ENCODE measurements at regions of chr1 and their contacts with region 1.

Region 1: DNA sequence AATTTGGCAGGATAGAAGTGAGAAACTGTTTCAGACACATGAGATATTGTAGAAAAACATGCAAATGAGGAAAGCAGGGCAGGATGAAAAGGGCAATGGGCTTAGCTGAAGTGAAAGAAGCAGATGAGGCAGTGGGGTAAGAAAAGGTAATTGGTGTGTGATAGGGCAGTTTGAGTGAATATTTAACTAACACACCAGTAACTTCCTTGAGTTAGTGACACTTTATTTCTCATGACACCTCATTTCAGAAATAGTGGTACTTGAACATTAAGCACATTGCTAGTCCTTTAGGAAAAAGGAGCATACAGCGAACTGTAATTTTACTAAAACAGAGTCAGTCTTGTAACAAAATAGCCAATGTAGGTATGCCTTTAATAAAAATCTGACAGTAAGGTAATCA is 415.0 kb downstream of the DPYD start:
- DNase-seq: peak; percentile 43
- ATAC-seq: peak; percentile 99
- H3K4me3 ChIP-seq: no peak overlapping the region
- H3K27ac ChIP-seq: no peak overlapping the region
- H3K4me1 ChIP-seq: no peaks in the 10 kb centered on the region
- H3K27me3 ChIP-seq: no peaks in the 10 kb centered on the region
- CTCF ChIP-seq: no peak
- EP300 ChIP-seq: peak; percentile 28 to 48; a peak in 2 of 4 replicates
- POLR2A ChIP-seq: no peak
- RAD21 ChIP-seq: no peak

Region 2: GRCh38 chr1:97163591-97164275 is 342.1 kb before region 1 on chr1:
- CTCF ChIA-PET with region 1: no interaction called
- POLR2A ChIA-PET with region 1: no interaction called
- RAD21 ChIA-PET with region 1: no interaction called
- SMC1A ChIA-PET with region 1: no interaction called
- in situ Hi-C with region 1: no loop called
- intact Hi-C with region 1: loop called (anchors 5 kb)
- DNase-seq: peak; percentile 51
- ATAC-seq: peak; percentile 83
- H3K4me3 ChIP-seq: no peak overlapping the region
- H3K27ac ChIP-seq: no peak overlapping the region
- H3K4me1 ChIP-seq: peaks cover 4% of the 10 kb centered on the region; the same call in 1 of the 2 replicates
- H3K27me3 ChIP-seq: no peaks in the 10 kb centered on the region
- CTCF ChIP-seq: no peak
- EP300 ChIP-seq: peak in 1 of 2 experiments; percentile 27; a peak in 1 of 4 replicates
- POLR2A ChIP-seq: no peak
- RAD21 ChIP-seq: no peak

Region 3: GRCh38 chr1:97356309-97356708 is 149.5 kb before region 1 on chr1:
- CTCF ChIA-PET with region 1: no interaction called
- POLR2A ChIA-PET with region 1: no interaction called
- RAD21 ChIA-PET with region 1: no interaction called
- SMC1A ChIA-PET with region 1: no interaction called
- in situ Hi-C with region 1: no loop called
- intact Hi-C with region 1: no loop called
- DNase-seq: no peak
- ATAC-seq: no peak
- H3K4me3 ChIP-seq: no peak overlapping the region
- H3K27ac ChIP-seq: no peak overlapping the region
- H3K4me1 ChIP-seq: no peaks in the 10 kb centered on the region
- H3K27me3 ChIP-seq: no peaks in the 10 kb centered on the region
- CTCF ChIP-seq: no peak
- EP300 ChIP-seq: no peak
- POLR2A ChIP-seq: no peak
- RAD21 ChIP-seq: no peak

Region 4: GRCh38 chr1:97427371-97427770 is 78.4 kb before region 1 on chr1:
- CTCF ChIA-PET with region 1: no interaction called
- POLR2A ChIA-PET with region 1: no interaction called
- RAD21 ChIA-PET with region 1: interaction called, 5 read pairs
- SMC1A ChIA-PET with region 1: no interaction called
- in situ Hi-C with region 1: no loop called
- intact Hi-C with region 1: loop called (anchors 5 kb)
- DNase-seq: peak; percentile 19
- ATAC-seq: peak; percentile 80
- H3K4me3 ChIP-seq: no peak overlapping the region
- H3K27ac ChIP-seq: no peak overlapping the region
- H3K4me1 ChIP-seq: no peaks in the 10 kb centered on the region; the same call in 1 of the 2 replicates
- H3K27me3 ChIP-seq: no peaks in the 10 kb centered on the region
- CTCF ChIP-seq: no peak
- EP300 ChIP-seq: no peak
- POLR2A ChIP-seq: no peak
- RAD21 ChIP-seq: no peak

Region 5: DNA sequence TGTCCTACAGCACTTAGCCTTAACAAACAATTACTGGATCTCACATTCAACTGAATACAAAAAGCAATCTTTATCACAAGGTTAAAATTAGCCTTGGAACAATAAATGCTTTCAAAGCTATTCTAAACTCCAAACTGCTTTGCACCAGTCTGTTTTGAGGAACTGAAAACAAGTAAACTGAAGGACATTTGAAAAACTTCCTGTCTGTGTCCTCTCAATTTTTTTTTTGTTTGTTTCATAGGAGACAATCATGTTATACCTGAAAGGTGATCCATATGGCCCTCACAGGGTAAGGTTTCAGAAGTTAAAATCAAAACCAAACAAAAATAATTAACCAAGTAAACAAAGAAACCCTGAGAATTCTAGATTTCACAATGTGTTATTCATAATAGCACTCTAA is 44.0 kb before region 1 on chr1:
- CTCF ChIA-PET with region 1: interaction called, 9 read pairs
- POLR2A ChIA-PET with region 1: interaction called, 4 read pairs
- RAD21 ChIA-PET with region 1: interaction called, 10 read pairs
- SMC1A ChIA-PET with region 1: interaction called, 20 read pairs
- in situ Hi-C with region 1: no loop called
- intact Hi-C with region 1: loop called (anchors 5 kb)
- DNase-seq: peak; percentile 59
- ATAC-seq: peak; percentile 95
- H3K4me3 ChIP-seq: no peak overlapping the region
- H3K27ac ChIP-seq: peak overlapping the region; percentile 36; the same call in 1 of the 2 replicates
- H3K4me1 ChIP-seq: peaks cover 8% of the 10 kb centered on the region; the same call in 1 of the 2 replicates
- H3K27me3 ChIP-seq: no peaks in the 10 kb centered on the region
- CTCF ChIP-seq: no peak
- EP300 ChIP-seq: peak; percentile 78 to 95
- POLR2A ChIP-seq: no peak
- RAD21 ChIP-seq: no peak

Region 6: GRCh38 chr1:97489834-97490233 is 16.0 kb before region 1 on chr1:
- CTCF ChIA-PET with region 1: interaction called, 7 read pairs
- POLR2A ChIA-PET with region 1: interaction called, 8 read pairs
- RAD21 ChIA-PET with region 1: interaction called, 3 read pairs
- SMC1A ChIA-PET with region 1: interaction called, 15 read pairs
- in situ Hi-C with region 1: no loop called
- intact Hi-C with region 1: no loop called
- DNase-seq: no peak
- ATAC-seq: peak; percentile 85
- H3K4me3 ChIP-seq: no peak overlapping the region
- H3K27ac ChIP-seq: no peak overlapping the region
- H3K4me1 ChIP-seq: no peaks in the 10 kb centered on the region
- H3K27me3 ChIP-seq: no peaks in the 10 kb centered on the region
- CTCF ChIP-seq: no peak
- EP300 ChIP-seq: no peak
- POLR2A ChIP-seq: no peak
- RAD21 ChIP-seq: no peak

Region 7: GRCh38 chr1:97726383-97726782 is 220.6 kb after region 1 on chr1:
- CTCF ChIA-PET with region 1: no interaction called
- POLR2A ChIA-PET with region 1: no interaction called
- RAD21 ChIA-PET with region 1: no interaction called
- SMC1A ChIA-PET with region 1: no interaction called
- in situ Hi-C with region 1: no loop called
- intact Hi-C with region 1: no loop called
- DNase-seq: no peak
- ATAC-seq: no peak
- H3K4me3 ChIP-seq: no peak overlapping the region
- H3K27ac ChIP-seq: no peak overlapping the region
- H3K4me1 ChIP-seq: no peaks in the 10 kb centered on the region
- H3K27me3 ChIP-seq: no peaks in the 10 kb centered on the region
- CTCF ChIP-seq: no peak
- EP300 ChIP-seq: no peak
- POLR2A ChIP-seq: no peak
- RAD21 ChIP-seq: no peak